ENCODE measurements at regions of chr11 and their contacts with region 1.

Region 1: DNA sequence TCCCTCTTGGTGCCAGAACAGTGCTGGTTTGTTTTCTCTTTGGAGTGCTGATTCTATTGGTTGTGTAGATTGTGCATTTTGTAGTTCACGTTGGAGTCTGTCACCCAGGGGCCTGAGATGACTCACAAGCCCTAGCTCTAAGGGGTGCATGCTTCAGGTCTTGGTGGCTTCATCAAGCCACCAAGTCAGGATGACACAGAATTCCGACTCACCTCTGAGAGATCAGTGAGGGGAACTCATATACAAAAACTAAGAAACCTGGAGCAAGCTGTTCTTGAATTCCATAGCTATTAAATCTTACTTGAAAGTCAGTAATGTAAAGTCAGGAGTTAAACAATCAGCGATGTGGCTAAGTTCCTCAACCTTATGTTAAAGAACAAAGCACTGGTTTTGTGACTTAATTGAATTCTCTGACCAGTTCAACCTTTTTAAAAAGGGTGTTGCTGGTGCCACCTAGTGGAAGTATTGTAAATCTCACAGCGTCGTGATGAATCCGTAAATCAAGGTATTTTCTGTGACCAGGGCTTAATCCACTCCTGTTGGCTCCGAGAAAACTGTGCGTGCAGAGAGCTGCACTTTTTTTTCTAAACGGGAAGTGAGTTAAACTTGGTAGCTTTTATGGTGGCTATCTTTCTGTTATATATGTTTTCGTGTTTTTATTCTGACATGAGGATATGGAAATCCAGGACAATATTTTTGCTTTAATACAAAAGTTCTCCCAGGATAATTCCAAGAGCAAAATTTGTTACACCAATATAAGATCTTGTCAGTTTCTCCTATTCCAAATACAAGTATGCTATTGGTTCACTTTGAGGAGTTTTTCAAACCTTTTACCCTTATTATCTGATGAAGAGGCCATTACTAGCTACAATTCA is 14.6 kb downstream of the MMP13 start:
- DNase-seq: peak; percentile 50
- H3K4me3 Mint-ChIP-seq: no peak overlapping the region
- H3K27ac Mint-ChIP-seq: no peak overlapping the region
- H3K4me1 Mint-ChIP-seq: no peaks in the 10 kb centered on the region
- H3K27me3 Mint-ChIP-seq: peaks cover 47% of the 10 kb centered on the region
- CTCF ChIP-seq: peak; percentile 43

Region 2: DNA sequence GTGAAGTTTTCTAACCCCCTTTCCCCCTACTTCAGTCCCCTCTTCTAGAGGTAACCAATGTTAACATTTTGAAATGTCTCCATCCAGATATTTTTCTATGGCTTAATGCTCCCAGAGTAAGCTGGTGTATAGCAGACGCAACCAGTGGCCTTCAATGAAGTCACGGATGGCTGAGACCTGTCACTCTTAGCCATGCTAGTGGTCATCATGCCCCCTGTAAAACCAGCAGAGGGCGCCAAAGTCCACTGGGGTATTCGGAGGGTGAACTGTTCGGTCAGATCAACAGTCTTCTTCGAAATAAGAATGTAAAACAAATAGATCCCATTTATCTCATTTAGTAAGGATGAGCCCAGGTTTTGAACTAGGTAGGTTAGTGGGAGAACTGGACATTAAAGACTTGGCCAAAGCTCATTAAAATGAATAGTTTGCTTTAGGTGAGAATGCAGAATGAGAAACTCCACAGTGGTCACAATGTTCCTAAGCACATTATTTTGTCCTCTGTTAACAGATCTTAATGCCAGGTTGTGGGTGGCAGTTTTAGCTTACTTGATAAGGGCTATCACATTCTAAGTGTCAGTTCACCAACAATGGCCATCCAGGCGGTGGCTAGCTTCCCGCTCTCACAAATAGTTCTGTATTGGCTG is 207.6 kb before region 1 on chr11:
- CTCF ChIA-PET with region 1: no interaction called
- intact Hi-C with region 1: loop called (anchors 1 kb)
- DNase-seq: peak; percentile 74
- H3K4me3 Mint-ChIP-seq: no peak overlapping the region
- H3K27ac Mint-ChIP-seq: no peak overlapping the region
- H3K4me1 Mint-ChIP-seq: no peaks in the 10 kb centered on the region
- H3K27me3 Mint-ChIP-seq: no peaks in the 10 kb centered on the region
- CTCF ChIP-seq: peak; percentile 64

Region 3: GRCh38 chr11:102810945-102811660 is 129.8 kb before region 1 on chr11:
- CTCF ChIA-PET with region 1: interaction called, 3 read pairs
- intact Hi-C with region 1: loop called (anchors 5 kb)
- DNase-seq: no peak
- H3K4me3 Mint-ChIP-seq: no peak overlapping the region
- H3K27ac Mint-ChIP-seq: no peak overlapping the region
- H3K4me1 Mint-ChIP-seq: peaks cover 9% of the 10 kb centered on the region
- H3K27me3 Mint-ChIP-seq: peaks cover 7% of the 10 kb centered on the region
- CTCF ChIP-seq: peak; percentile 36

Region 4: GRCh38 chr11:102831489-102832440 is 109.2 kb before region 1 on chr11:
- CTCF ChIA-PET with region 1: interaction called, 6 read pairs
- intact Hi-C with region 1: loop called (anchors 1 kb)
- DNase-seq: peak; percentile 79
- H3K4me3 Mint-ChIP-seq: peak overlapping the region; percentile 72
- H3K27ac Mint-ChIP-seq: no peak overlapping the region
- H3K4me1 Mint-ChIP-seq: peaks cover 34% of the 10 kb centered on the region
- H3K27me3 Mint-ChIP-seq: peaks cover 12% of the 10 kb centered on the region
- CTCF ChIP-seq: peak; percentile 57

Region 5: DNA sequence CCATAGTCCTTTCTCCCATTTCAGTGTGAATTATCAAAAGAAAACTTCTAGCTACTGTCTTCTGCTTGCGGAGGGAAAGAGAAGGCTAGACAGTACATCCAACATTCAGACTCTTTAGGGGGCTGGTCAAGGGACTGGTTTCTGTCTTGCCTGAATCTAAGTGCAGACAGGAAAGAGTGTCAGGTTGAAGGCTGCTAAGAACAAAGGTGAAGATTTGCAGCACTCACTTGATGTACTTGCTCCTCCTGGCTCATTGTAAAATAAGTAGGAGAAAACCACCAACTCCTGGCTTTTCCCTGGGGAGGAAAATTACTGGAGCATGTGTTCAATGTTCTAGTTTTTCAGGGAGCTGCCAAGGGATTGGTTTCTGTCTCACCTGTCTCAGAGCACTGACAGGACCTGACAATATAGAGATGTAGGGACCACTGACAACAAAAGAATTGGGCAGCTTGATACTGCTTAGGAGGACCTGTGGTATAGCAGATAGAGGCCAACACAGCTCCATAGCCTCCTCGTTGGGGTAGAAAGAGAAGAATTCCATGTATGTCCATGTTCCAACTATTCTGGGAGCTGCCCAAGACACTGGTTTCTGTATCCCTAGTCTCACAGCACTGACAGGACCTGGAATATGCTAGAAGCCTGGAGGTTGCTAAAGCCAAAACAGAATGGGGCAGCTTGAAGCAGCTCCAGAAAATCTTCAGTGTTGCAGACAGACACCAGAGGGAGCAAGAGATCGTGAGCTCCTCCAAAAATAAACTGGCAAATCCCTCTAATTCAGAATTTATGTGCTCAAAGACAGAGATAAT is 26.5 kb before region 1 on chr11:
- CTCF ChIA-PET with region 1: interaction called, 14 read pairs
- intact Hi-C with region 1: loop called (anchors 1 kb)
- DNase-seq: peak; percentile 27
- H3K4me3 Mint-ChIP-seq: no peak overlapping the region
- H3K27ac Mint-ChIP-seq: no peak overlapping the region
- H3K4me1 Mint-ChIP-seq: no peaks in the 10 kb centered on the region
- H3K27me3 Mint-ChIP-seq: peaks cover 28% of the 10 kb centered on the region
- CTCF ChIP-seq: peak; percentile 45

Region 6: GRCh38 chr11:103055221-103055890 is 114.4 kb after region 1 on chr11:
- CTCF ChIA-PET with region 1: no interaction called
- intact Hi-C with region 1: loop called (anchors 10 kb)
- DNase-seq: peak; percentile 0
- H3K4me3 Mint-ChIP-seq: no peak overlapping the region
- H3K27ac Mint-ChIP-seq: no peak overlapping the region
- H3K4me1 Mint-ChIP-seq: no peaks in the 10 kb centered on the region
- H3K27me3 Mint-ChIP-seq: no peaks in the 10 kb centered on the region
- CTCF ChIP-seq: no peak